ENCODE measurements at regions of chrX and their contacts with region 1.

Region 1: DNA sequence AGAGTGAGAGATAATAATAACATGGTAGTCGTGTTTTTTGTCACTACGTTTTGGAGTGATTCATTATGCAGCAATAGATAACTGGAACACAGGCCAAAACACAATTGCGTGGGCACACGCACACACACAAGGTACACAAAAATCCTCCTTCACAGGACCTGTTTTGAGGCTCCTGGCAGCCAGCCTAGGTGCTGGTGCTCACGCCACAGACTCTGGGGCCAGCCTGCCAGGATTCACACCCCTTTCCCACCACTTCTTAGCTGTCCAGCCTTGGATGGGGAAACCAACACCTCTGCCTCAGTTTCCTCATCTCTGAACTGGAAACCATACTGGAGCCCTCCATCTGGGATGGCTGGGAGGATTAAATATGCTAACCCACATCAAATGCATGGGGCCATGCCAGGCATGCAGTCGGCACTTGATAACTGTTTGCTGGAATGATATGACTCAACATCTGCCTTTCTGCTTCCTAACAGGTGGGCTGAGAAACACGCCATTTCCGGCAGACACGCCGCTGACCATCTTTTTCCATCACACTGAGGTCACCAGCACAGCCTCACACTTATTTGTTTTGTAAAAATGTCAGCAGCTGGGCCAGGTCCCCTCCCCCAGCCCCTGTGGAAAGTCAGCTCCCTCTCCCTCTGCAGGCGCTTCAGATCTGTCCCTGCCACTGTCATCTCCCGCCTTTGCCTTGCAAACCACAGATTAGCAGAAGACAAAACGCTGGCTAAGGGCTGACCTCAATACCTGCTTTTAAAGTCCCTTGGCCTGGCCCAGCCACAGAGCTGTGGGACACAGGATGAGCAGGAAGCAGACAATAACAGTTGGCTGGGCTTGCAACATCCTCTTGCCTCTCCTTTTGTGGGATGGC is 237.5 kb downstream of the BCOR start:
- DNase-seq: peak; percentile 94
- H3K4me3 Mint-ChIP-seq: peak overlapping the region; percentile 9
- H3K27ac Mint-ChIP-seq: peak overlapping the region; percentile 97
- H3K4me1 Mint-ChIP-seq: peaks cover 53% of the 10 kb centered on the region
- H3K27me3 Mint-ChIP-seq: no peaks in the 10 kb centered on the region

Region 2: DNA sequence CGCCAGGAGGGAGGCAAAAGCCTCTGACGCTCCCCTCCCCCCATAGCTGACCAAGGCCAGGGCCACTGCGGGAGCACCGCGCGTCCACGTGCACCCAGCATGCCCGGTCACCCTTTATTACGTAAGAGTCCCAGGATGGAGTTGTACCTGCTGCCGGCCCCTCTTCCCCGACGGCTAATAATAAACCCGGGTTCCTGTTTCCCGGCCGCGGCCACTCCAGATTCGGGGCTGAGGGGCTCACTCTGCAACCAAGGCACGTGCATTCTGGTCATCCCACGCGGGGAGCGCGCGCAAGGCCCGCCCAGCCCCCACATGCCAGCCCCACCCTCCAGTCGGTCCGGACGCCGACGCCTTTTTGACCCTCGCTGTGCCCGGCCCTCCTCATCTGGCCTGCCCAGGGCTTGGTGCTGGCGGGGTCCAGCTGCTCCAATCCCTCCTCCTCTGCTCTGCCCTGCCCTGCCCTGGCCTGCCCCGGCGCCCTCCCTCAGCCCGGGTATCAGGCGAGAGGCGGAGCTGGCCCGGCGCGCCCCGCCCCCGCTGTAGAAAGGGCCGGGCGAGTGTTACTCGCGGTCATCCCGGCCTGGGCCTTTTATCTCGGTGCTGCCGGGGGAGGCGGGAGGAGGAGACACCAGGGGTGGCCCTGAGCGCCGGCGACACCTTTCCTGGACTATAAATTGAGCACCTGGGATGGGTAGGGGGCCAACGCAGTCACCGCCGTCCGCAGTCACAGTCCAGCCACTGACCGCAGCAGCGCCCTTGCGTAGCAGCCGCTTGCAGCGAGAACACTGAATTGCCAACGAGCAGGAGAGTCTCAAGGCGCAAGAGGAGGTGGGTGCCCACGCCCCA is 1056.4 kb before region 1 on chrX:
- CTCF ChIA-PET with region 1: no interaction called
- intact Hi-C with region 1: loop called (anchors 5 kb)
- DNase-seq: peak; percentile 79
- H3K4me3 Mint-ChIP-seq: peak overlapping the region; percentile 87
- H3K27ac Mint-ChIP-seq: peak overlapping the region; percentile 97
- H3K4me1 Mint-ChIP-seq: peaks cover 17% of the 10 kb centered on the region
- H3K27me3 Mint-ChIP-seq: no peaks in the 10 kb centered on the region

Region 3: DNA sequence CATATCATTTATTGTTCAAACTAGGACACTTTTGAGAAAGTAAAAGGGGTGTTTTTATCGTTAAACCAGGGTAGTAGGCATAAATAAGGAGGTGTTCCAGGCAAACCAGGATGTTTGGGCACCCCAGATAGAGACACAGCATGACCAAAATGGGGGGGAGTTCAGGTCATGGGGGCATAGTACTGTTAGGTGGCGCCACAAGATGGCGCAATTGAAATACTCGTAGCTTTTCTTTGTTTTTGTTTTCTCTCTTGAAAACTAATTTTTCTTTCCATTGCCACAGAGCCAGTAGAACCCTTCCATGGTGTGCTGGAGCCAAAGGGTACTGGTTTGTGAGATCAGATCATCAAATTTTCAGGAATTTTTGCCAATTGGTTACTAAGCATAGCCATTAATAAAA is 45.8 kb before region 1 on chrX:
- CTCF ChIA-PET with region 1: interaction called, 9 read pairs
- intact Hi-C with region 1: loop called (anchors 1 kb)
- DNase-seq: peak; percentile 58
- H3K4me3 Mint-ChIP-seq: no peak overlapping the region
- H3K27ac Mint-ChIP-seq: no peak overlapping the region
- H3K4me1 Mint-ChIP-seq: peaks cover 30% of the 10 kb centered on the region
- H3K27me3 Mint-ChIP-seq: no peaks in the 10 kb centered on the region

Region 4: DNA sequence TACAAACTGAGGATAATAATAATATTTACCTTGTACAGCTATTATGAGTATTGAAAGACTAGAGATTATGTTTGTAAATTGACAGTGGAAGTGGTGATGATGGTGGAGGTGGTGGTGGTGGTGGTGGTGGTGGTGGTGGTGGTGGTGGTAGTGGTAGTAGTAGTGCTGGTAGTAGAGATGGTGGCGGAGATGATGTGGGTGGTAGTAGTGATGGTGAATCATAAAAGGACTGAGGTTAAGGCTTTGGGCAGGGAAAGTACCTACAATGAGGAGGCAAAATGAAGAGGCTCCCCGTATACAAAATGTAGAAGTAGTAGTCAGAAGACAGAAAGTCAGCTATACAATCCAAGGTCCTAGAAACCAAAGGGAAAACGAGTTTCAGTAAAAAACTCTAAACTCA is 23.4 kb after region 1 on chrX:
- CTCF ChIA-PET with region 1: no interaction called
- intact Hi-C with region 1: loop called (anchors 1 kb)
- DNase-seq: peak; percentile 72
- H3K4me3 Mint-ChIP-seq: no peak overlapping the region
- H3K27ac Mint-ChIP-seq: peak overlapping the region; percentile 79
- H3K4me1 Mint-ChIP-seq: peaks cover 25% of the 10 kb centered on the region
- H3K27me3 Mint-ChIP-seq: no peaks in the 10 kb centered on the region

Region 5: GRCh38 chrX:40006106-40007017 is 146.1 kb after region 1 on chrX:
- CTCF ChIA-PET with region 1: no interaction called
- intact Hi-C with region 1: loop called (anchors 2 kb)
- DNase-seq: peak; percentile 47
- H3K4me3 Mint-ChIP-seq: peak overlapping the region; percentile 36
- H3K27ac Mint-ChIP-seq: no peak overlapping the region
- H3K4me1 Mint-ChIP-seq: peaks cover 28% of the 10 kb centered on the region
- H3K27me3 Mint-ChIP-seq: peaks cover 37% of the 10 kb centered on the region

Region 6: GRCh38 chrX:40097497-40098263 is 237.5 kb after region 1 on chrX and contains the start of gene BCOR:
- CTCF ChIA-PET with region 1: no interaction called
- intact Hi-C with region 1: loop called (anchors 2 kb)
- DNase-seq: peak; percentile 75
- H3K4me3 Mint-ChIP-seq: peak within 1 kb of the TSS; percentile 86
- H3K27ac Mint-ChIP-seq: peak within 1 kb of the TSS; percentile 82
- H3K4me1 Mint-ChIP-seq: peaks cover 24% of the 10 kb centered on the region
- H3K27me3 Mint-ChIP-seq: no peaks in the 10 kb centered on the region
- total RNA-seq, gene BCOR: 29.1 to 29.9 TPM

Region 7: DNA sequence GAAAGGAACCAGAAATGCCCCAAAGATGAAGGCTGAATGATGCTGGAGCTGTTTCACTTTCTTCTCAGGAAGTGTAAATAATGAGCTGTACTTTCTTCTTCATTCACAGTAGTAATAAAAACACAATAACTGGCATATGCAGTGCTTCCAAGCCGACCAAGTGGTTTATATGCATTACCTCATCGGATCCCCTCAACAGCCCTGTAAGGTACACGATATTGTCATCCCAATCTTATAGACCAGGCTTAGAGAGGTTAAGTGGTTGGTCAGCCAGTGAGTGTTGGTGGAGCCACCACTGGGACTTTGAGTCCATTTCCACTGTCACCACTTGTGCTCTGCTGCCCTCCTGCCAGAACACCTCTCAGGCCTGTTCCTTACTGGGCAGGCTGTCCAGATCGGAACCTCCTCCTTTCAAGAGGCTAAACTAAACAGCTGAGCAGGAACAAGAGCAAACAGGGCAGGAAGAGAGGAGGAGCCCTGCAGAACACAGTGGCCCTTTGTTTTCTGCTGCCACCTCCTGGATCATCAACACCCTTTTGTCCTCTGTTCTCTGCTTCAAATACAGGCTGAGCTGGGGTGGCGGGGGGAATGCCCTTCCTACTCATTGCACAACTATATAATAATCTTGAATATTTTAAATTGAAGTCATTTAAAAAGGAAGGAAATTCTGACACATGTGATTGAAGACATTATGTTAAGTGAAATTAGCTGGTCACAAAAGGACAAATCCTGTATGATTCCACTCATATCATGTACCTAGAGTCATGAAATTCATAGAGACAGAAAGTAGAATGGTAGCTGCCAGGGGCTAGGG is 608.0 kb after region 1 on chrX:
- CTCF ChIA-PET with region 1: no interaction called
- intact Hi-C with region 1: loop called (anchors 2 kb)
- DNase-seq: peak; percentile 79
- H3K4me3 Mint-ChIP-seq: no peak overlapping the region
- H3K27ac Mint-ChIP-seq: peak overlapping the region; percentile 61
- H3K4me1 Mint-ChIP-seq: peaks cover 36% of the 10 kb centered on the region
- H3K27me3 Mint-ChIP-seq: no peaks in the 10 kb centered on the region

Measured in activated naive CD4-positive, alpha-beta T cell treated with anti-CD3 and anti-CD28 coated beads for 36 hours (primary cell).